ENCODE measurements at regions of chr4 and their contacts with region 1.

Region 1: DNA sequence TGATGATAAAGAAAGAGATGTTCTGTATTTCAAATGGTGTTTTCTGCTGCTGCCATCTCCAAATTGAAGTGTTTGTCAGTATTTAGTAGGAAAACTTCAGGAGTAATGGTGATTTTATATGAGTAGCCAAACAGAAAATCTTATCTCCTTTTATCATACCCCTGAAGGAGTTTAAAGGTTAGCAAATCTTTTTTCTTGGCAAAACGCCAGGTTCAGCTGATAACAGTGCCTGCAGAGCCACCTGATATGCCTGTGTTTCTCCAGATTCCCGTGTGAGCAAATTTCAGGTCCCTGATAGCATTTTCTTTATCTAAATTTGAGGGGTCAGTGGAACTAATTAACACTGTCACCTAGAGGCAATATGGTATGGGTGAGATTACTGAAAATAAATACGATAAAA is 65.8 kb upstream of the ETNPPL start:
- DNase-seq: no peak
- H3K4me3 ChIP-seq: no peak overlapping the region
- H3K27ac ChIP-seq: no peak overlapping the region
- H3K4me1 ChIP-seq: no peaks in the 10 kb centered on the region
- CTCF ChIP-seq: no peak

Region 2: DNA sequence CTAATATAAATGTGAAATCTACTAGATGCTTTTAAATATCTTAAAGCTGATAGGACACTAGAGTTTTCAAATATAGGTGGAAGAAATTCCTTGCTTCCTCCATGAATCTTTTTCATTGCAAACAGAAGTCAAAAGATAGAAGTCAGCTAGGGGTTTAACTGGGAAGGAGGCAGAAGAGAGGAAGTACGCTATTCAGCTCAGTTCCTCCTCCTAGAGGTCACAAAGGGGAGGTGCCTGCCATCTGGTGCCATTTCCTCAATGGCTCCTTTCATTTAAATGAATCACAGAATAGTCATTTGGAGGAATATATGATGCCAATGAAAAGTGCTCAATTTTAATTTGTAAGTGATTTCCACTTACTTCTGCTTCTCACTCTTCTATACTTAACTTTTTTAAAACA is 465.4 kb after region 1 on chr4:
- CTCF ChIA-PET with region 1: no interaction called
- POLR2A ChIA-PET with region 1: no interaction called
- intact Hi-C with region 1: loop called (anchors 5 kb)
- DNase-seq: peak; percentile 54
- H3K4me3 ChIP-seq: no peak overlapping the region
- H3K27ac ChIP-seq: no peak overlapping the region
- H3K4me1 ChIP-seq: no peaks in the 10 kb centered on the region
- CTCF ChIP-seq: peak; percentile 80

Measured in OCI-LY7 (cell line).